CD8-positive, alpha-beta T cell (primary cell): ENCODE measurements at regions of chr12 and their contacts with region 1.

Region 1: GRCh38 chr12:52023182-52023975 is 16.6 kb downstream of the TAMALIN start:
- DNase-seq: peak; percentile 81 to 94 (median 91)
- ATAC-seq: peak; percentile 63
- H3K4me3 ChIP-seq: peak overlapping the region; percentile 53 to 66
- H3K4me3 Mint-ChIP-seq: peak overlapping the region; percentile 81
- H3K27ac ChIP-seq: peak overlapping the region; percentile 17 to 44
- H3K27ac Mint-ChIP-seq: peak overlapping the region; percentile 75
- H3K4me1 ChIP-seq: peaks cover 39% of the 10 kb centered on the region
- H3K4me1 Mint-ChIP-seq: peaks cover 43% of the 10 kb centered on the region
- H3K27me3 ChIP-seq: no peaks in the 10 kb centered on the region
- H3K27me3 Mint-ChIP-seq: no peaks in the 10 kb centered on the region
- CTCF ChIP-seq: peak; percentile 86

Region 2: GRCh38 chr12:51923501-51924271 is 99.7 kb before region 1 on chr12:
- CTCF ChIA-PET with region 1: interaction called, 22 read pairs
- POLR2A ChIA-PET with region 1: no interaction called
- intact Hi-C with region 1: no loop called
- DNase-seq: peak; percentile 21 to 74 (median 55)
- ATAC-seq: peak; percentile 82
- H3K4me3 ChIP-seq: no peak overlapping the region
- H3K4me3 Mint-ChIP-seq: peak overlapping the region; percentile 43
- H3K27ac ChIP-seq: no peak overlapping the region
- H3K27ac Mint-ChIP-seq: no peak overlapping the region
- H3K4me1 ChIP-seq: peaks cover 4% of the 10 kb centered on the region
- H3K4me1 Mint-ChIP-seq: peaks cover 4% of the 10 kb centered on the region
- H3K27me3 ChIP-seq: peaks cover 0 to 7% of the 10 kb centered on the region in 2 experiments
- H3K27me3 Mint-ChIP-seq: peaks cover 3% of the 10 kb centered on the region
- CTCF ChIP-seq: peak; percentile 84

Region 3: DNA sequence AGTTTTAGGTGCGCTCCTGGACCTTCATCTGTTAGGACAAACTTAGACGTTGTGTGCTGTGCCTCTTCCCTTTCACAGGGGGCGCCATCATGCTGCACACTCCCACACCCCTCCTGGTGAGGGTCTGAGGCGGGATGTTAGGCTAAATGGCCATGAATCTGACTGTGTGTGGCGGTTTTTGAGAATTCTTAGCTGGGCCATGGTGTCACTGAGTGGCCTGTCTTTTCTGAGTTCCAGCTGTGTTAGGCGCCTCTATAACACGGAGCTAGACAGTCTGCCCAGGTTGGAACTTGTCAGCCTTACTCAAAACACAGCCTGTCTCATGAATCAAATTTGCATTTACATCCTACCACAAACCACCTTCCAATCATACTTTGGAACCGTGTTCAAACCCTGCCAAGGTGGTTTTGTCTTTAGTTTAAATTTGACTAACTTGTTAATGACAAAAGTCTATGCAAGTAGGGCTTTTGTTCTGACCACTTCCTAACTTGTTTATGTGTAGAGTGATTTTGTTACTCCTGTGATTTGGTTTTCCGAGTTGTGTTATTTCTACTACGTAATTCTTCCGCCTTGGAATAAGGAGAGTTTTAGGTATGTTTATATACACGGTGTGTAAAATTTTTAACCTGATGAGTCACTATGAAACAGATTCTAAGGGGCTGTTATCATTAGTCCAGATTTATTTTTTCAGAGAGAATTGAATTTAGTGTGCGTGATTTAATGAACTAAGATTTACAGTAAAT is 52.3 kb before region 1 on chr12:
- CTCF ChIA-PET with region 1: interaction called, 39 read pairs
- POLR2A ChIA-PET with region 1: no interaction called
- intact Hi-C with region 1: no loop called
- DNase-seq: peak in 7 of 9 experiments; percentile 13 to 75 (median 44)
- ATAC-seq: peak; percentile 72
- H3K4me3 ChIP-seq: no peak overlapping the region
- H3K4me3 Mint-ChIP-seq: peak overlapping the region; percentile 52
- H3K27ac ChIP-seq: peak overlapping the region in 1 of 2 experiments; percentile 6
- H3K27ac Mint-ChIP-seq: peak overlapping the region; percentile 72
- H3K4me1 ChIP-seq: peaks cover 61% of the 10 kb centered on the region
- H3K4me1 Mint-ChIP-seq: peaks cover 62% of the 10 kb centered on the region
- H3K27me3 ChIP-seq: no peaks in the 10 kb centered on the region
- H3K27me3 Mint-ChIP-seq: no peaks in the 10 kb centered on the region
- CTCF ChIP-seq: peak; percentile 54

Region 4: DNA sequence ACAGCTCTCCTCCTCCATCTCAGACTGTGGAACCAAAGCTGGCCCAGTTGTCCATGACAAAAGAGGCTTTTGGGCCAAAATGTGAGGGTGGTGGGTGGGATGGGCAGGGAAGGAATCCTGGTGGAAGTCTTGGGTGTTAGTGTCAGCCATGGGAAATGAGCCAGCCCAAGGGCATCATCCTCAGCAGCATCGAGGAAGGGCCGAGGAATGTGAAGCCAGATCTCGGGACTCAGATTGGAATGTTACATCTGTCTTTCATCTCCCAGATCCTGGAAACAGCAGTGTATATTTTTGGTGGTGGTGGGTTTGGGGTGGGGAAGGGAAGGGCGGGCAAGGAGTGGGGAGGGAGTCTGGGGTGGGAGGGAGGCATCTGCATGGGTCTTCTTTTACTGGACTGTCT is 28.4 kb before region 1 on chr12:
- CTCF ChIA-PET with region 1: interaction called, 1,615 read pairs
- POLR2A ChIA-PET with region 1: interaction called, 13 read pairs
- intact Hi-C with region 1: loop called (anchors 1 kb)
- DNase-seq: no peak
- ATAC-seq: no peak
- H3K4me3 ChIP-seq: no peak overlapping the region
- H3K4me3 Mint-ChIP-seq: no peak overlapping the region
- H3K27ac ChIP-seq: no peak overlapping the region
- H3K27ac Mint-ChIP-seq: no peak overlapping the region
- H3K4me1 ChIP-seq: no peaks in the 10 kb centered on the region
- H3K4me1 Mint-ChIP-seq: peaks cover 5% of the 10 kb centered on the region
- H3K27me3 ChIP-seq: no peaks in the 10 kb centered on the region
- H3K27me3 Mint-ChIP-seq: no peaks in the 10 kb centered on the region
- CTCF ChIP-seq: no peak

Region 5: GRCh38 chr12:52050761-52051541 is 27.6 kb after region 1 on chr12 and contains the start of gene NR4A1:
- CTCF ChIA-PET with region 1: interaction called, 1,615 read pairs
- POLR2A ChIA-PET with region 1: interaction called, 6 read pairs
- intact Hi-C with region 1: loop called (anchors 1 kb)
- DNase-seq: peak; percentile 97 to 100 (median 99)
- ATAC-seq: peak; percentile 90
- H3K4me3 ChIP-seq: peak within 1 kb of the TSS; percentile 80 to 87
- H3K4me3 Mint-ChIP-seq: peak within 1 kb of the TSS; percentile 97
- H3K27ac ChIP-seq: peak within 1 kb of the TSS; percentile 81 to 99
- H3K27ac Mint-ChIP-seq: peak within 1 kb of the TSS; percentile 99
- H3K4me1 ChIP-seq: peaks cover 30% of the 10 kb centered on the region
- H3K4me1 Mint-ChIP-seq: peaks cover 35% of the 10 kb centered on the region
- H3K27me3 ChIP-seq: no peaks in the 10 kb centered on the region
- H3K27me3 Mint-ChIP-seq: peaks cover 3% of the 10 kb centered on the region
- CTCF ChIP-seq: no peak
- total RNA-seq, gene NR4A1: 59.7 to 60.0 TPM

Region 6: DNA sequence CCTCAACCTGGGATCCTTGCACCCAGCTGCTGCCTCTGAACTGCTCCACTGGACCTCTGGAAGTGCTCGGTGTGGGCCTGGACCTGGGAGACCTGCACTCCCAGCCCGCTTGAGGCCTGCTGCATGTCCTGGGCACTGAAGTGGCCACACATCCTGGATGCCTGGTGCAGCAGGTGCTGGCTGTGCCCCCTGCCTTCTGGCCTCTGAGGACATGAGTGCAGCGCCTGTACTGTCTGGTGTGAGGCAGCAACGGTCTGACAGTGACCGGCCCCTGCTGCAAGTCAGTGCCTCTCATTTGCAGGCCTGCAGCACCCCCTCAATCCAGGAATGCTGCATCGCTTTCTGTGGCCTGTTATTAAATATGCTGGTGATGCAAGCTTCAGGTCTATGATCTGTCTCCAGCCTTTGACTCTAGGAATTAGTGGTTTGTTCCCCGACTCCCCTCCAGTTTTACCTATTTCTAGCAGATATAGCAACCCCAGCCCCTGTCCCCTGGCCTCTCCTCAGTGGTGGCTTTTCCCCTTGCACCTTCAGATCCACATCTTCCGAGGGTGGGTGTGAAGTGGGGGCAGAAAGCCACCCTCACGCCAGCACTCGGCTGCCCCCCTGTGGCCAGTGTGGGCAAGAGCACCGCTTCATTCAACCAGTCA is 59.7 kb after region 1 on chr12:
- CTCF ChIA-PET with region 1: interaction called, 896 read pairs
- POLR2A ChIA-PET with region 1: interaction called, 18 read pairs
- intact Hi-C with region 1: loop called in 1 of 2 experiments (anchors 1 kb)
- DNase-seq: peak; percentile 42 to 81 (median 66)
- ATAC-seq: peak; percentile 90
- H3K4me3 ChIP-seq: no peak overlapping the region
- H3K4me3 Mint-ChIP-seq: no peak overlapping the region
- H3K27ac ChIP-seq: no peak overlapping the region
- H3K27ac Mint-ChIP-seq: no peak overlapping the region
- H3K4me1 ChIP-seq: peaks cover 14% of the 10 kb centered on the region
- H3K4me1 Mint-ChIP-seq: peaks cover 10% of the 10 kb centered on the region
- H3K27me3 ChIP-seq: no peaks in the 10 kb centered on the region
- H3K27me3 Mint-ChIP-seq: peaks cover 4% of the 10 kb centered on the region
- CTCF ChIP-seq: peak; percentile 98

Region 7: DNA sequence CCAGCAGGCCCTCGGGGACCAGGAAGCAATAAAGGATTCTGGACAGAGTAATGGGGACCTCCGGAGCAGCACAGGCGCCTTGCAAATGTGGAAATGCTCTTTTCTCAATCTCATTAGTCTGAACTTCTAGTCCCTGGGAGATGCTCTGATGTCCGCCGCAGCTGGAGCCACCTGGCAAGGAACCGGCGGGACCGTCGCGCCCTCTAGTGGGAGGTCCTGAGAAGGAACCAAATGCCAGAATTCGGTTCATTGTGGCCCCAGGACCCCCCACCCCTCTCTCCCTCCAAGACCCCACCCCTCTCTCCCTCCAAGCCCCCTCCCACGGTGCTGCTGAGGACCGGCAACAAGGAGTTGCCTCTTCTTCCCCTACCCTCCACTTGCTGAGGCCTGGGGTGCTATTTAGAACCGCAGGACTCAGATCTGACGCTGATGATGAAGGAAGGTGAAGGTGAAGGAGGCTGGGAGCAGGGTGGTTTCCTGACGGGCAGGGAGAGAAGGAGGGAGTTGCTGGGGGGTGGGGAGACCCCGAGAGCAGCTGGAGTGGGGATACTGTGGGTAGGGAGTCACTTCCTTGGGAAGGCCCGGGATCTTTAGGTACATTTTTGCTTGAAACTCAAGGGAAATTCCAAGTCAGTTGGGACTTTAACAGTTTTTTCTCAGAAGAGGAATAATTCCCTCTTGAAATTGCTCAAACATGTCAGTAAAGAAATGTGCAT is 98.6 kb after region 1 on chr12:
- CTCF ChIA-PET with region 1: interaction called, 48 read pairs
- POLR2A ChIA-PET with region 1: no interaction called
- intact Hi-C with region 1: loop called (anchors 1 kb)
- DNase-seq: peak; percentile 27 to 70 (median 62)
- ATAC-seq: peak; percentile 45
- H3K4me3 ChIP-seq: no peak overlapping the region
- H3K4me3 Mint-ChIP-seq: no peak overlapping the region
- H3K27ac ChIP-seq: no peak overlapping the region
- H3K27ac Mint-ChIP-seq: no peak overlapping the region
- H3K4me1 ChIP-seq: peaks cover 6% of the 10 kb centered on the region
- H3K4me1 Mint-ChIP-seq: peaks cover 7% of the 10 kb centered on the region
- H3K27me3 ChIP-seq: peaks cover 0 to 7% of the 10 kb centered on the region in 2 experiments
- H3K27me3 Mint-ChIP-seq: peaks cover 36% of the 10 kb centered on the region
- CTCF ChIP-seq: peak; percentile 69

Region 8: DNA sequence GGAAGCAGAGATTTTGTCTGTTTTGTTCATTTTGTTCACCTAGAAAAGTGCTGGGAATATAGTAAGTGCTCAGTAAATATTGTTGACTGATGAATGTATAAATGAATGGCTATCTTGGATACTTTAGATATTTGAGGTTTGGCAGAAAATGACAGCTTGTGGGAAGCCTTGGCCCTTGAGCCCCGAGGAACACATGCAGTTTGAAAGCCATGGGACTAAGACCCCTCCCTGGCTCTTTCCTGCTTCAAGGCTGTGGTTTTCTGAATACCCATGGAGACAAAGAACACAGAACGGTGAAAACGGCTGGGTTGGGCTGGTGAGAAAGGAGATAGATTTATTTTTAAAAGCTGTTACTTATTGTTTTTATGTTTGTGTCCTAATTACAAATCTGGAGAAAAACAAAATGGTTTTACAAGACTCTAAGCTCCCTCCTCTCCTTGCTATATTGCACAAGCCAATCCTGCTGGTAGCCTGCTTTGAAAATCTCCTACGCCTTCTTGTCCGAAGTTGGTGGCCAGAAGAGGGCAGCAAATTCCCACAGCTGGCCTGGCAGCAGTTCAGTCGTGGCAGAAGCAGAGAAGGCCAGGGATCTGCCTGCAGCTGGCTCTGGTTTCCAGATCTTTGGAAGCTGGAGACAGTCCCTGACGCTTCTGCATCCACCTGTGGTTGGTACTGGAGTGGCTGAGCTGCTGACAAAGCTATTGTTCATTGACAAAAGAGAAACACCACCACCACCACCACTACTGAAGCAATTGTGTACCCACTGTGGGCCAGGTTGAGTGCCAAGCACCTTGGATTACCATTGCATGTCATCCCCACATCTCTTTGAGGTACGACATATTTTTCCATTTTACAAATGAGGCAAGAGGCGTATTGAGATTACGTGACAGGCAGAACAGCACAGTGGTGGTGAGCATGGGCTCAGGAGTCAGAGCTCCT is 349.1 kb after region 1 on chr12:
- CTCF ChIA-PET with region 1: no interaction called
- POLR2A ChIA-PET with region 1: no interaction called
- intact Hi-C with region 1: no loop called
- DNase-seq: peak; percentile 31 to 75 (median 60)
- ATAC-seq: no peak
- H3K4me3 ChIP-seq: no peak overlapping the region
- H3K4me3 Mint-ChIP-seq: no peak overlapping the region
- H3K27ac ChIP-seq: no peak overlapping the region
- H3K27ac Mint-ChIP-seq: no peak overlapping the region
- H3K4me1 ChIP-seq: no peaks in the 10 kb centered on the region
- H3K4me1 Mint-ChIP-seq: no peaks in the 10 kb centered on the region
- H3K27me3 ChIP-seq: peaks cover 0 to 2% of the 10 kb centered on the region in 2 experiments
- H3K27me3 Mint-ChIP-seq: peaks cover 21% of the 10 kb centered on the region
- CTCF ChIP-seq: peak; percentile 34